ENCODE measurements at regions of chr16 and their contacts with region 1.

Region 1: GRCh38 chr16:2980227-2981086 is at the start of gene PKMYT1:
- DNase-seq: peak; percentile 37 to 94
- H3K4me3 ChIP-seq: peak within 1 kb of the TSS; percentile 69 to 91
- H3K27ac ChIP-seq: peak within 1 kb of the TSS; percentile 69 to 82
- H3K4me1 ChIP-seq: peaks cover 9 to 12% of the 10 kb centered on the region in 2 donors
- H3K27me3 ChIP-seq: no peaks in the 10 kb centered on the region
- CTCF ChIP-seq: no peak
- total RNA-seq, gene PKMYT1: not detected

Region 2: DNA sequence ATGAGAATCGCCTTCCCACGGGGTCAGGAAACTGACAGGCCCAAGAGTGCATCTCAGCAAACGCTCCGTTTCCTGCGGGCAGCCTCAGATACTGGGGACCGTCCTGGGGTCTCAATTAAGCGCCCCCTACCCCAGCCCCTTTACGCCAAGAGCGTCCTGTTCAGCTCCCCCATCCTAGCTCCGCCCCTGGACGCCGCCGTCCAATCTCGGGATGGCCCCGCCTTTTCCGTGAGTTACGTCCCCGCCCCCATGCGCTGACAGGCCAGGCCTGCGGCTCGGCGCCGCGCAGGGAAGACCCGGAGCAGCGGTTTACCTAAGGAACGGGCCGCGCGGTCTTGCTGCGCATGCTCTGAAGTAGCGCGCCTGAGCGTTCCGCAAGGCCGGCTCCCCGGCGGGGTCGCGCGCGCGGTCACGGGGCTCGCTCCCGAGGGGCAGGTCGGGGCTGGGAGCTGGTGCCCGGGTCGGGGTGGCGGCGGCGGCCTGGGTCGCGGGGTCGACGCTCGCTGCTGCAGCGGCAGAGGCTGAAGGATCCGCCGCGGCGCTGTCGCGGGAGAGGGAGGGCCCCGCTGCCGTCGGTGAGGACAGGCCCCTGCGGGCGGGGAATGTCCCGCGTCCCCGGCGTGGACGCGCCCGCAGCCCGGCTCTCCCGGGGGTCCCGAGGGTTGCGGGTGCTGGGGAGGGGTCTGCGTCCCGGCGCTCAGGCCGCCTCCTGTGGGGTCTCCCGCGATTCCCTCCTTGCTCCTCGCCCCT is 68.7 kb before region 1 on chr16 and contains the start of gene FLYWCH1:
- intact Hi-C with region 1: loop called (anchors 5 kb)
- DNase-seq: peak; percentile 92 to 99
- H3K4me3 ChIP-seq: peak within 1 kb of the TSS; percentile 73 to 87
- H3K27ac ChIP-seq: peak within 1 kb of the TSS; percentile 83 to 88
- H3K4me1 ChIP-seq: peaks cover 0 to 15% of the 10 kb centered on the region in 2 donors
- H3K27me3 ChIP-seq: no peaks in the 10 kb centered on the region
- CTCF ChIP-seq: no peak
- total RNA-seq, gene FLYWCH1: 74.3 TPM

Region 3: DNA sequence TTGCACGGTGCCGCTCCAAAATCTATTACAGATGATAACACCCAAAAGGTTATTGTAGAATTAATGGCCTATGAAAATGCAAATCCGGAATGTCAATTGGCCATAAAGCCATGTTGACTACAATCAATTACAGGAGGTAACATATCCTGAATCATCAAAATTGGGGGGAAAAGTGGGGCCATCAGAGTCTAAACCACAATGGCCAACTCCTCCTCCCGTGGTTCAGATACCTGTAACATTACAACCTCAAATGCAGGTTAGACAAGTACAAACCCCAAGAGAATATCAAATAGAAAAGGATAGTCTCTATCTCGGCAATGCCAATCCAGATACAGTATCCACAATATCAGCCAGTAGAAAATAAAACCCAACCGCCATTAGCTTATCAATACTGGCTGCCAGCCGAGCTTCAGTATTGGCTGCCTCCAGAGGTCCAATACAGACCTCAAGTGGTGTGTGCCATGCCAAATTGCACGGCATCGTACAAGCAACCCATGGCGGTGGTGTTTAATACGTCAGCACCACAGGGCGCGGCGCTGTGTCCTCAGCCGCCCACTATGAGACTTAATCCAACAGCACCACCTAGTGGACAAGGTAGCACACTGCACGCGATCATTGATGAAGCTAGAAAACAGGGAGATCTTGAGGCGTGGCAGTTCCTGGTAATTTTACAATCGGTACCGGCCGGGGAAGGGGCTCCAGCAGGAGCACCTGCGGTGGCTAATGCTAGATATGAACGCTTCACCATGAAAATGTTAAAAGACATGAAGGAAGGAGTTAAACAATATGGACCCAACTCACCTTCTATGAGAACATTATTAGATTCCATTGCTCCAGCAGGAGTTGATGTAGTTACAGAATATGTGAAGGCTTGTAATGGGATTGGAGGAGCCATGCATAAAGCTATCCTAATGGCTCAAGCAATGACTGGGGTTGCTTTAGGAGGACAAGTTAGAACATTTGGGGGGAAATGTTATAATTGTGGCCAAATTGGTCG is 53.5 kb before region 1 on chr16:
- intact Hi-C with region 1: no loop called
- DNase-seq: peak; percentile 68 to 95
- H3K4me3 ChIP-seq: peak overlapping the region in 1 of 2 donors; percentile 45
- H3K27ac ChIP-seq: no peak overlapping the region
- H3K4me1 ChIP-seq: peaks cover 0 to 4% of the 10 kb centered on the region in 2 donors
- H3K27me3 ChIP-seq: no peaks in the 10 kb centered on the region
- CTCF ChIP-seq: peak; percentile 93 to 97 (median 94)